ENCODE measurements at regions of chr2 and their contacts with region 1.

Region 1: GRCh38 chr2:231514103-231514950 is 15.9 kb downstream of the NMUR1 start:
- DNase-seq: peak; percentile 99
- ATAC-seq: peak; percentile 98
- H3K4me3 ChIP-seq: peak overlapping the region; percentile 62 to 83 (median 75)
- H3K4me3 Mint-ChIP-seq: peak overlapping the region; percentile 94
- H3K27ac ChIP-seq: peak overlapping the region; percentile 92 to 93
- H3K27ac Mint-ChIP-seq: peak overlapping the region; percentile 98
- H3K4me1 ChIP-seq: peaks cover 11 to 13% of the 10 kb centered on the region in 2 donors
- H3K4me1 Mint-ChIP-seq: peaks cover 16% of the 10 kb centered on the region
- H3K27me3 ChIP-seq: no peaks in the 10 kb centered on the region
- H3K27me3 Mint-ChIP-seq: no peaks in the 10 kb centered on the region
- CTCF ChIP-seq: no peak

Region 2: DNA sequence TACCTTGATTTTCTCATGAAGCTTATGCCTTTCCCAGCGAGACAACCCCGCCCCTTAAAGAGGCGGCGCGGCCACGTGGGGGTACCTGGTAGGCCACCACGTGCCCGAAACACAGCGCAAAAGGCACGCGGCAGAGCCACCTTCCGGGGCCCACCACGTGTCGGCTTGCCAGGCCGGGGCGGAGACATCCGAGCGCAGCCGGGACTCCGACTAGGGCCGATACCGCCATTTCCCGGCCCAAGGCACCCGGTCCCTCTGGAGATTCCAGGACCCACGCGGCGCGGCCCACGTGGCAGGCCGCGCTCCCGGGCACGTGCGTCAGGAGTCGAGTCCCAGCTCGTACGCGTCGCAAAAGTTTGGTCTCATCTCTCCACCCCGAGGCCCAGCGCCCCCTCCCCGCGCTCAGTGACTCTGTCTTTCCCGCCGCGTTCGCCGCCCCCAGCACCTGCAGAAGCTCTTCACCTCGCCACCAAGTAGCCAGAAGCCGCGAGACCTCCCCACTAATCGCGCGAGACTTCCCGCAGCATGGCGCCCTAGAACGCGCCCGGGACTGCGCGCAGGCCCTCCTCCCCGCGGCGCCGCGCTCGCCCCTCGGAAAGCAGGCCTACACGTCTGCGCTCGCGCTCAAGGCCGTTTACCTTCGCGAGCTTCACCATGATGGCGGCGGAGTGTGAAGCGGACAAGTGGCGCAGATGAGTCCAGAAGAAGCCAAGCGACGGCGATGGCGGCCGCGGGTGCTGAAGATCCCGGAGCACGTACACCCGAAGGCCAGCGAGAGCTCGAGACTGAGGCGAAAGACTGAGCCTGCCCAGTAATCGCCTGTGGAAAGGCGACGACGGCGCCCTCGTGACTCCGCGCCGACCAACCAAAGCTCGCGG is 50.4 kb before region 1 on chr2 and contains the start of gene NCL:
- CTCF ChIA-PET with region 1: interaction called, 5 read pairs
- POLR2A ChIA-PET with region 1: interaction called, 7 read pairs
- intact Hi-C with region 1: loop called (anchors 1 kb)
- DNase-seq: peak; percentile 98
- ATAC-seq: peak; percentile 51
- H3K4me3 ChIP-seq: peak within 1 kb of the TSS; percentile 62 to 97 (median 93)
- H3K4me3 Mint-ChIP-seq: peak within 1 kb of the TSS; percentile 99
- H3K27ac ChIP-seq: peak within 1 kb of the TSS; percentile 97 to 98
- H3K27ac Mint-ChIP-seq: peak within 1 kb of the TSS; percentile 100
- H3K4me1 ChIP-seq: peaks cover 29 to 33% of the 10 kb centered on the region in 2 donors
- H3K4me1 Mint-ChIP-seq: peaks cover 46% of the 10 kb centered on the region
- H3K27me3 ChIP-seq: no peaks in the 10 kb centered on the region
- H3K27me3 Mint-ChIP-seq: no peaks in the 10 kb centered on the region
- CTCF ChIP-seq: no peak
- total RNA-seq, gene NCL: 383 and 439 TPM in 2 replicates

Region 3: GRCh38 chr2:231530091-231531011 is 16.0 kb after region 1 on chr2 and contains the start of gene NMUR1:
- CTCF ChIA-PET with region 1: interaction called, 14 read pairs
- POLR2A ChIA-PET with region 1: no interaction called
- intact Hi-C with region 1: no loop called
- DNase-seq: peak; percentile 81
- ATAC-seq: peak; percentile 96
- H3K4me3 ChIP-seq: peak within 1 kb of the TSS in 2 of 5 experiments; percentile 31 to 46
- H3K4me3 Mint-ChIP-seq: peak within 1 kb of the TSS; percentile 49
- H3K27ac ChIP-seq: no peak within 1 kb of the TSS
- H3K27ac Mint-ChIP-seq: no peak within 1 kb of the TSS
- H3K4me1 ChIP-seq: peaks cover 11 to 14% of the 10 kb centered on the region in 2 donors
- H3K4me1 Mint-ChIP-seq: peaks cover 9% of the 10 kb centered on the region
- H3K27me3 ChIP-seq: peaks cover 0 to 28% (median 8%) of the 10 kb centered on the region in 4 experiments
- H3K27me3 Mint-ChIP-seq: peaks cover 28% of the 10 kb centered on the region
- CTCF ChIP-seq: peak; percentile 91
- total RNA-seq, gene NMUR1: 0.10 TPM in 1 of 2 replicates, not detected in the other

Region 4: GRCh38 chr2:231706731-231707624 is 192.7 kb after region 1 on chr2:
- CTCF ChIA-PET with region 1: no interaction called
- POLR2A ChIA-PET with region 1: interaction called, 3 read pairs
- intact Hi-C with region 1: loop called (anchors 1 kb)
- DNase-seq: peak; percentile 98
- ATAC-seq: peak; percentile 48
- H3K4me3 ChIP-seq: peak overlapping the region; percentile 77 to 99 (median 89)
- H3K4me3 Mint-ChIP-seq: peak overlapping the region; percentile 99
- H3K27ac ChIP-seq: peak overlapping the region; percentile 98 to 99
- H3K27ac Mint-ChIP-seq: peak overlapping the region; percentile 100
- H3K4me1 ChIP-seq: peaks cover 20 to 38% of the 10 kb centered on the region in 2 donors
- H3K4me1 Mint-ChIP-seq: peaks cover 28% of the 10 kb centered on the region
- H3K27me3 ChIP-seq: no peaks in the 10 kb centered on the region
- H3K27me3 Mint-ChIP-seq: no peaks in the 10 kb centered on the region
- CTCF ChIP-seq: peak; percentile 96